MCF 10A (cell line): ENCODE measurements at regions of chr17 and their contacts with region 1.

Region 1: DNA sequence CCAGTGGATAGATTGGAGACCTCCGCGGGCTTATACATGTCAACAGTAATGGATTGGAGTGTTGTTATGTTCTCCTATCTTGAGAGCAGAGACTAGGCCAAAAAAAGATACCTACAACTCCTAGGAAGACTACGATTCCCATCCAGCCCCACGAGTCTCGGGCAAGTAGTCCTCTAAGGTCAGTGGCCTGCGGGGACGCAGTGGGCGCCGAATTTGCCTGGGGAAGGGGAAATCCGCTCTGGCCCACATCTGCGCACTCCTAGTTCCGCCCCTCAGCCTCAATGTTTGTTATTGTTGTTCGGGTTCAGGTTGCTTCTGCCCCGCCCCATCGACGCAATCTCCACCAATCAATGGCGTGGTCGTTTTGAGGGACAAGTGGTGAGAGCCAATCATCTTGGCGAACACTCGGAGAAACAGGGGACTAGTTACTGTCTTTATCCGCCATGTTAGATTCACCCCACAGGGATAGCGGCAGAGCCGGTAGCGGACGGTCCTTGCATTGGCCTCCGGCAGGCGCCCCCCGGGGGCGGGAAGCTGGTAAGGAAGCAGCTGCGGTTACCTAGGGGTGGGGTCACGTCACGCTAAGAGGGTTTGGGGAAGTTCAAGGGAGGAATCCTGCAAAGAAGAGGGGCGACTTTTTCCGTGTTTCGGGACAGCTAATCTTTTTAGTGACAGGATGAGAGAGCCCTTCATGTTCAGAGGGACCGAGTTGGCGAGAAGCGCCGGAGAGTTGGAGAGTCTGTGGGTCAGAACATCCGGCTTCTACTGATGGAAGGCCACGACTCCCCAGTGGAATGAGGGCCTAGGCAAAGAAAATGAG is at the start of gene NBR1:
- DNase-seq: peak; percentile 99
- H3K4me3 Mint-ChIP-seq: no peak within 1 kb of the TSS
- H3K27ac Mint-ChIP-seq: no peak within 1 kb of the TSS
- H3K4me1 Mint-ChIP-seq: no peaks in the 10 kb centered on the region
- H3K27me3 Mint-ChIP-seq: no peaks in the 10 kb centered on the region
- CTCF ChIP-seq: no peak
- total RNA-seq, gene NBR1: 105 and 106 TPM in 2 replicates

Region 2: GRCh38 chr17:42908872-42909700 is 261.9 kb before region 1 on chr17:
- CTCF ChIA-PET with region 1: no interaction called
- POLR2A ChIA-PET with region 1: no interaction called
- intact Hi-C with region 1: no loop called
- DNase-seq: no peak
- H3K4me3 Mint-ChIP-seq: no peak overlapping the region
- H3K27ac Mint-ChIP-seq: no peak overlapping the region
- H3K4me1 Mint-ChIP-seq: peaks cover 5% of the 10 kb centered on the region
- H3K27me3 Mint-ChIP-seq: peaks cover 50% of the 10 kb centered on the region
- CTCF ChIP-seq: no peak

Region 3: DNA sequence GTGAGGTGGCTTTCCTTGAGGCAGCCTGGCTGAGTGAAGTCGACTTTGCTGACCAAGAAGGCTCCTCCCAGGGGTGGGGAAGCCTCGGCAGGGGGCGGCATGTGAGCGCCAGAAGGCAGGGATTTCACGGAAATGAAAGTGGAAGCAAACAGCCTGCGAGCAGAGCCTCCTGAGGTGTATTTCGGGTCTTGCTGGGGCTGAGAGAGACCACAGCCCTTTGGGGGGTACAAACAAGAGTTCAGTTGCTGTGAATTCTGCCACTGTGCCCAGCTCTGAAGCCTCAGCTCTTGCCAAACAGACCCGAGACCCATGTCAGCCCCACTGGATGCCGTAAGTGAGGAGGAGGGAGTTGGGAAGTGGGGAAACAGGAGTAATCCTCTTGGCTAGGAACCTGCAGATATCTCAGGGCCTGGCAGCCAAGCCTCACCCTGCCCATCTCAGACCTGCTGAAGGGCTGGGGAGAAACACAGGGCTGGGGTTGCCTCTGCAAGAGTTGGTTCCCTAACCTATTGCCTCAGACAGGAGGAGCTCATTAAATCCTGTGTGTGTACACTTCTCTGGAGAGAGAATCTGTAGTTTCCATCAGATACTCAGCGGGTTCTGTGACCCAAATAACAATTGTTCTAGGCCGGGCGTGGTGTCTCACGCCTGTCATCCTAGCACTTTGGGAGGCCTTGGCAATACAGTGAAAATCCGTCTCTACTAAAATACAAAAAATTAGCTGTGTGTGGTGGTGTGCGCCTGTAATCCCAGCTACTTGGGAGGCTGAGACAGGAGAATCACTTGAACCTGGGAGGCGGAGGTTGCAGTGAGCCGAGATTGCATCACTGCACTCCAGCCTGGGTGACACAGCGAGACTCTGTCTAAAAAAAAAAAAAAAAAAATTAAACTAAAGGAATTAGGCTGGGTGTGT is 164.1 kb before region 1 on chr17 and contains the start of gene IFI35:
- CTCF ChIA-PET with region 1: no interaction called
- POLR2A ChIA-PET with region 1: interaction called, 12 read pairs
- intact Hi-C with region 1: loop called (anchors 5 kb)
- DNase-seq: peak; percentile 86
- H3K4me3 Mint-ChIP-seq: peak within 1 kb of the TSS; percentile 96
- H3K27ac Mint-ChIP-seq: peak within 1 kb of the TSS; percentile 98
- H3K4me1 Mint-ChIP-seq: peaks cover 11% of the 10 kb centered on the region
- H3K27me3 Mint-ChIP-seq: no peaks in the 10 kb centered on the region
- CTCF ChIP-seq: no peak
- total RNA-seq, gene IFI35: 6.3 and 7.3 TPM in 2 replicates

Region 4: DNA sequence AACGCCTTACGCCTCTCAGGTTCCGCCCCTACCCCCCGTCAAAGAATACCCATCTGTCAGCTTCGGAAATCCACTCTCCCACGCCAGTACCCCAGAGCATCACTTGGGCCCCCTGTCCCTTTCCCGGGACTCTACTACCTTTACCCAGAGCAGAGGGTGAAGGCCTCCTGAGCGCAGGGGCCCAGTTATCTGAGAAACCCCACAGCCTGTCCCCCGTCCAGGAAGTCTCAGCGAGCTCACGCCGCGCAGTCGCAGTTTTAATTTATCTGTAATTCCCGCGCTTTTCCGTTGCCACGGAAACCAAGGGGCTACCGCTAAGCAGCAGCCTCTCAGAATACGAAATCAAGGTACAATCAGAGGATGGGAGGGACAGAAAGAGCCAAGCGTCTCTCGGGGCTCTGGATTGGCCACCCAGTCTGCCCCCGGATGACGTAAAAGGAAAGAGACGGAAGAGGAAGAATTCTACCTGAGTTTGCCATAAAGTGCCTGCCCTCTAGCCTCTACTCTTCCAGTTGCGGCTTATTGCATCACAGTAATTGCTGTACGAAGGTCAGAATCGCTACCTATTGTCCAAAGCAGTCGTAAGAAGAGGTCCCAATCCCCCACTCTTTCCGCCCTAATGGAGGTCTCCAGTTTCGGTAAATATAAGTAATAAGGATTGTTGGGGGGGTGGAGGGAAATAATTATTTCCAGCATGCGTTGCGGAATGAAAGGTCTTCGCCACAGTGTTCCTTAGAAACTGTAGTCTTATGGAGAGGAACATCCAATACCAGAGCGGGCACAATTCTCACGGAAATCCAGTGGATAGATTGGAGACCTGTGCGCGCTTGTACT is 45.6 kb before region 1 on chr17 and contains the start of gene BRCA1:
- CTCF ChIA-PET with region 1: interaction called, 5 read pairs
- POLR2A ChIA-PET with region 1: interaction called, 37 read pairs
- intact Hi-C with region 1: loop called (anchors 1 kb)
- DNase-seq: peak; percentile 99
- H3K4me3 Mint-ChIP-seq: peak within 1 kb of the TSS; percentile 99
- H3K27ac Mint-ChIP-seq: peak within 1 kb of the TSS; percentile 88
- H3K4me1 Mint-ChIP-seq: peaks cover 26% of the 10 kb centered on the region
- H3K27me3 Mint-ChIP-seq: no peaks in the 10 kb centered on the region
- CTCF ChIP-seq: no peak
- total RNA-seq, gene BRCA1: 12.4 and 18.1 TPM in 2 replicates

Region 5: GRCh38 chr17:43316522-43317142 is 145.7 kb after region 1 on chr17:
- CTCF ChIA-PET with region 1: no interaction called
- POLR2A ChIA-PET with region 1: interaction called, 16 read pairs
- intact Hi-C with region 1: no loop called
- DNase-seq: no peak
- H3K4me3 Mint-ChIP-seq: no peak overlapping the region
- H3K27ac Mint-ChIP-seq: no peak overlapping the region
- H3K4me1 Mint-ChIP-seq: peaks cover 7% of the 10 kb centered on the region
- H3K27me3 Mint-ChIP-seq: no peaks in the 10 kb centered on the region
- CTCF ChIP-seq: no peak